CD8-positive, alpha-beta memory T cell (primary cell): ENCODE measurements at regions of chr6 and their contacts with region 1.

Region 1: DNA sequence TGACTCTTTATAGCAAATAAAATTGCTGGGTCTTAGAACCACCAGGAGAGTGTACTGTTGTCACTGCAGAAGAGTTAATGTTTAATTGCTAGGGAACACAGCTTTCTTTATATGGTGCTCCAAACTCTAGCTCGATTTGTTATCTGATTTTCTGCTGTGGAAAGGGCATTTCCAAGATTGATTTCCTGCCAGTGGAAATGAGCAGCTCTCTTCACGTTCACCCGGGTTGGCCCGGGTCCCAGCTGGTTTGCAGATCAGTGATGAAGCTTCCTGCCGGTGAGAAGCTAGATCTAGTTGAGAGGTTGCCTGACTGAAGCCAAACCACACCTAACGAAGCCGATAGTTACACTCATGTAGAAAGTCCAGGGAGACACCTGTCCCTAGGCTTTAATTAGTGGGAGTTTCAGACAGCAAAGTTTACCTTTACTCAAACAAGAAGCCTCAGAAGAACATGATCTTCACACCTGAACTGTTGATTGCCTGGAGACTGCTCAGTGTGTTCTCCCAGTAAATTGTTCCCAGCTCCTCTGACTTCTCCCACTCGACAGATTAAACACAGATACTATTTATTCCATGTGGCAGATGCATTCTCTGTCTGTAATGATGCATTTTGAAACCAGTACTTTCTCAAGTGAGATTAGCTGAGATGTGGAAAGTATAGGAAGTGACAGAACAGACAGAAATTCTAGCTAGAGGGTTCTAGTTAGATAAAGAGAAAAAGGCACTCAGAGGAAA is 27.8 kb downstream of the PAQR8 start:
- DNase-seq: peak; percentile 28 to 75 (median 60)
- H3K4me3 ChIP-seq: peak overlapping the region; percentile 33
- H3K4me3 Mint-ChIP-seq: peak overlapping the region; percentile 70 to 86 (median 80)
- H3K27ac ChIP-seq: peak overlapping the region; percentile 55
- H3K27ac Mint-ChIP-seq: peak overlapping the region; percentile 89 to 98 (median 95)
- H3K4me1 ChIP-seq: peaks cover 66% of the 10 kb centered on the region
- H3K4me1 Mint-ChIP-seq: peaks cover 71 to 93% (median 83%) of the 10 kb centered on the region in 3 donors
- H3K27me3 ChIP-seq: no peaks in the 10 kb centered on the region
- H3K27me3 Mint-ChIP-seq: no peaks in the 10 kb centered on the region

Region 2: GRCh38 chr6:52371656-52372191 is 18.1 kb before region 1 on chr6:
- CTCF ChIA-PET with region 1: interaction called, 13 read pairs
- POLR2A ChIA-PET with region 1: interaction called, 6 read pairs
- DNase-seq: no peak
- H3K4me3 ChIP-seq: no peak overlapping the region
- H3K4me3 Mint-ChIP-seq: no peak overlapping the region
- H3K27ac ChIP-seq: no peak overlapping the region
- H3K27ac Mint-ChIP-seq: peak overlapping the region in 3 of 8 donors; percentile 32 to 41 (median 40)
- H3K4me1 ChIP-seq: peaks cover 33% of the 10 kb centered on the region
- H3K4me1 Mint-ChIP-seq: peaks cover 63 to 90% (median 88%) of the 10 kb centered on the region in 3 donors
- H3K27me3 ChIP-seq: no peaks in the 10 kb centered on the region
- H3K27me3 Mint-ChIP-seq: no peaks in the 10 kb centered on the region

Region 3: DNA sequence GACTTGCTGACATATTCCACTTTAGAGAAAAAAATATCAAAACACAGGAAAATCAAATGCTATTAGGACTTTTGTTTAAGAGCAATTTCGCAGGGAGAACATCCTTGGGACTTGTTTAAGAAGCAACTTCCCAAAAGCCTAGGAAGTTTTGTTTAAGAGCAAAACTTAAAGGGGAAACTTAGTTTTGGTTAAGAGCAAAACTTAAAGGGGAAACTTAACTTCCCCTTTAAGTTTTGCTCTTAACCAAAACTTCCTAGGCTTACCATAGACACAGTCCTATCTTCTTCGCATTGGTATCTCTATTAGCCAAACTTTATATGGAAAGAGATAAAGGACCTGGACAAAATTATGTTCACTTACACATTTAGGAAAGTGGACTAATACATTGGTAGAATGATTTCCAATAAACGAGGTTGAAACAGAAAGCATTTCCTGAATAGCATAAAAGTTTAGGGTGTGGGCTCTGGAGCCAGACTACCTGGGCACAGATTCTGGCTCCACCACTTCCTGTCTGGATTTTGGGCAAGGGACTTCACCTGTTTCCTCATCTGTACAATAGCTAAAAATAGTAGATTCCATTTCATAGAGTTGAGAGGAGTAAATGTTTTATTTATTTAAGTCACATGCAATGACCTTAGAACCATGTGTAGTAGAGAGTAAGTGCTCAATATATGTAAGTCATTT is 12.1 kb before region 1 on chr6:
- CTCF ChIA-PET with region 1: interaction called, 13 read pairs
- POLR2A ChIA-PET with region 1: interaction called, 6 read pairs
- DNase-seq: no peak
- H3K4me3 ChIP-seq: no peak overlapping the region
- H3K4me3 Mint-ChIP-seq: peak overlapping the region in 4 of 7 donors; percentile 20 to 55 (median 28)
- H3K27ac ChIP-seq: no peak overlapping the region
- H3K27ac Mint-ChIP-seq: peak overlapping the region in 7 of 8 donors; percentile 17 to 87 (median 82)
- H3K4me1 ChIP-seq: peaks cover 58% of the 10 kb centered on the region
- H3K4me1 Mint-ChIP-seq: peaks cover 57 to 82% (median 81%) of the 10 kb centered on the region in 3 donors
- H3K27me3 ChIP-seq: no peaks in the 10 kb centered on the region
- H3K27me3 Mint-ChIP-seq: no peaks in the 10 kb centered on the region